Head of caudate nucleus (tissue), 42 donors: ENCODE measurements at regions of chr6 and their contacts with region 1.

Region 1: DNA sequence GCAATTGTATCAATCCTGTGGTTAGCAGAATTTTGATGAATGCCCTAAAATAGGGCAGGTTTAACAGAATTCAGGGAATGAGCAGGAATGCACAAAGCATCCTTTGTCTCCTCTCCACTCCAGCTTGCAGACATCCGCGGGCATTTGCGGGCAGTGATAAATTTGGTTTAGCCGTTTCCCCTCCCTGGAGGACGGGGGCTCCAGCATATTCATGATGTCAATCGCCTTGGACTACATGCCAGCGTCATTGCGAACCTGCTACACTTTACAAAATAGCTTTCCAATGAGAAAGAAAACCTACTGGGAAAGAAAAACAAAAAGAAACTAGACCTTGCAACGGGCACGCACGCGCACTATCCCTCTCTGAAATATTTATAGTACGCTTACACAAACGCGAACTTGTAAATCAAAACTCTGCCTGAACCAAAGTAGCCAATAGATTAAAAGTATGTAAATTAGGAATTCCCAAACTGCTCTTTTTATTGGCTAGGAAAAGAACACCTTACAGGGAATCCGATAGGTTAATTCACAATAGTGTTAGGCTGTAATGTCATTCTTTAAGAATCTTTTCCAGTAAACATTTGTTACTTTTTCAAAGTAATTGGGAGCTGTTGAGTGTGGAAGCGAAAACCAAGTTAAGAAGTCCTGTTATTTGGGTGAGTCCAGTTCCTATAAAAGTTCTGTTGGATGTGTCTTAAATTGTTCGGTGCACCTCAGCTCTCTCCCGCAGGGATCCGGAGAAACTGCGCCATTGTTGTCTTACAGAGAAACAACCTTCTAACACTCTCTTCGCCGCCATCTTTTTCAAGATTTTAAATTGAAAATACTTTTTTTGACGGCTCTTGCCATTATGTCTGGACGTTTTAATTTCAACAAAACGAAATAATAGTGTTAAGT is 136.7 kb downstream of the HFE start:
- DNase-seq: peak in 14 of 42 donors; percentile 22 to 71 (median 51)

Region 2: GRCh38 chr6:26270903-26271667 is 47.2 kb after region 1 on chr6:
- intact Hi-C with region 1: loop called (anchors 10 kb)
- DNase-seq: peak in 18 of 42 donors; percentile 10 to 69 (median 36)